ENCODE measurements at regions of chr16 and their contacts with region 1.

Region 1: DNA sequence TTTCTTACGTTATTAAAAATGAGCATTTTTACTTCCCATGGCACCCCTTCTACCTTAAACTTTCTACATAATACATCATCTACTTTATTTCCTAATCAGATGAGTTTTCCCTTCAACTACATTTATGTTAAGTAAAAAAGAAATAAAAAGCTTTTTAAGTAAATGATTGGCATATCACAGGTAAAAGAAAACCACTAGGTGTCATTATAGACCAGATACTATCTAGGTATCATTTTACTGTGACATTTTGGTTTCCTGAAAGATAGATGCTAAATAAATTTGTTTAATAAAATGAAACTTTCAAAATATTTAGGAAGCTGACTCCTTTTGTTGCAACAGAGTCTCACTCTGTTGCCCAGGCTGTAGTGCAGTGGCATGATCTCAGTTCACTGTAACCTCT is 3.8 kb upstream of the CMTM1 start:
- DNase-seq: no peak
- ATAC-seq: no peak
- H3K4me3 Mint-ChIP-seq: no peak overlapping the region
- H3K27ac Mint-ChIP-seq: peak overlapping the region; percentile 64
- H3K4me1 Mint-ChIP-seq: peaks cover 56% of the 10 kb centered on the region
- H3K27me3 Mint-ChIP-seq: no peaks in the 10 kb centered on the region
- CTCF ChIP-seq: peak; percentile 44

Region 2: DNA sequence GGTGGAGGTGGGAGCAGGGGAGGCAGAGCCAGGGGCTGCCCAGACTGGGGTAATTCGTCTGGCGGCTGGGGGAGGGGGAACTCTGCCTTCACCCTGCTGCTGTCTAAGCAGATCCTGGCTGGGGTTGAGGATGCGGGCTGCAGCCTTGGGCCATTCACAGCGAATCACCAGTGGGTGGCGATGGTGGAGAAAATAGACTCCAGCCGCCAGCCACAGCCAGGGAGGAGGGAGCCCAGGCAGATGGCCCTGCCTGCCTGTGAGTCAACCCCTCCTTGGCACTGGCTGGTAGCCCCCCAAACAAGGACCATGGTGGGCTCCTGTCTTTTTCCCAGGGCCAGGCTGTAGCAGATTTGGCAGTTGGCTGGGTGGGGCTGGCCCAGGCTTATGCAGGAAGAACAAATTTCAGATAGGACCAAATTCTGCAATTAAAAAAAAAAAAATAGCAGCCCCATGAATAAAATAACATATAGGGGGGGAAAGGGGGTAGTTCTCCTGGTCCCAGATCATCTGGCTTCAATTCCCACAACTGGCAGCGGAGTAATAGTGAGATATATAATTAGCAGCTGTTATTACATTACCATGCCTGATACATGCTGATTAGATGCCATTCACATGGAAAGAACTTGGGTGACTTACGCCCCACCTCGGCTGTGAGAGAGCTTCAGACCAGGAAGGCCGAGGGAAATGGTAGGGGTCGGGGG is 237.4 kb before region 1 on chr16:
- CTCF ChIA-PET with region 1: no interaction called
- POLR2A ChIA-PET with region 1: no interaction called
- intact Hi-C with region 1: no loop called
- DNase-seq: peak; percentile 7
- ATAC-seq: no peak
- H3K4me3 Mint-ChIP-seq: no peak overlapping the region
- H3K27ac Mint-ChIP-seq: no peak overlapping the region
- H3K4me1 Mint-ChIP-seq: no peaks in the 10 kb centered on the region
- H3K27me3 Mint-ChIP-seq: peaks cover 8% of the 10 kb centered on the region
- CTCF ChIP-seq: no peak

Region 3: GRCh38 chr16:66521951-66522771 is 40.2 kb before region 1 on chr16:
- CTCF ChIA-PET with region 1: interaction called, 26 read pairs
- POLR2A ChIA-PET with region 1: interaction called, 4 read pairs
- intact Hi-C with region 1: no loop called
- DNase-seq: peak; percentile 98
- ATAC-seq: peak; percentile 82
- H3K4me3 Mint-ChIP-seq: peak overlapping the region; percentile 42
- H3K27ac Mint-ChIP-seq: peak overlapping the region; percentile 88
- H3K4me1 Mint-ChIP-seq: peaks cover 74% of the 10 kb centered on the region
- H3K27me3 Mint-ChIP-seq: no peaks in the 10 kb centered on the region
- CTCF ChIP-seq: no peak

Region 4: GRCh38 chr16:66596986-66597848 is 34.8 kb after region 1 on chr16:
- CTCF ChIA-PET with region 1: interaction called, 17 read pairs
- POLR2A ChIA-PET with region 1: no interaction called
- intact Hi-C with region 1: no loop called
- DNase-seq: peak; percentile 41
- ATAC-seq: peak; percentile 63
- H3K4me3 Mint-ChIP-seq: peak overlapping the region; percentile 16
- H3K27ac Mint-ChIP-seq: peak overlapping the region; percentile 79
- H3K4me1 Mint-ChIP-seq: peaks cover 33% of the 10 kb centered on the region
- H3K27me3 Mint-ChIP-seq: no peaks in the 10 kb centered on the region
- CTCF ChIP-seq: no peak